AG04450 (cell line): ENCODE measurements at regions of chr7 and their contacts with region 1.

Region 1: GRCh38 chr7:121994625-121995410 is 121.9 kb downstream of the PTPRZ1 start:
- DNase-seq: peak; percentile 55
- H3K4me3 ChIP-seq: no peak overlapping the region
- H3K27ac ChIP-seq: no peak overlapping the region
- H3K27me3 ChIP-seq: no peaks in the 10 kb centered on the region
- CTCF ChIP-seq: peak; percentile 79

Region 2: DNA sequence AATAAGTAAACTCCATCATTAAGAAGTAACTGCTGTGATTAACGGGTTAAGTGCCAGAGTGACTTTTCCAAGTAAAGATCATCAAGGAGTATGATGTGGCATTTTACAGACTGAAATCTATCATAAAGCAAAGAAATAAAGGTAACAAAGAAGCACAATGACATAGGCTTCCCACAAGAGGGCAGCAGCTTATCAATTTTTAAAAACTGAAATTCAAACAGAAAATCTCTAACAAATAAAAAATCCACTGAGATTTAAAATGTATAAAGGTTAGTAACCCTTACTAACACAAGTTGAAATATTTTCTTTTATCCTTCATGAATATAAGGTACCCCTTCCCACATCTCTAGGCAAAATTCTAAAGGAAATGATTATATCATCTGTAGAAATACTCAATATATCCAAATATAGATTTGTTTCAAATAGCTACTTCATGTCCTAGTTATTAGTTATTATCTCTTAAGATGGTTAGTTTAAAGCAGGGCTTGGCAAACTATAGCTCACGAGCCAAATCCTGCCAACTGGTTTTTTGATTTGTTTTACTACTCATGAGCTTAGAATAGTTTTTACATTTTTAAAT is 627.9 kb before region 1 on chr7:
- CTCF ChIA-PET with region 1: interaction called, 30 read pairs
- POLR2A ChIA-PET with region 1: no interaction called
- DNase-seq: peak; percentile 10
- H3K4me3 ChIP-seq: no peak overlapping the region
- H3K27ac ChIP-seq: no peak overlapping the region
- H3K27me3 ChIP-seq: no peaks in the 10 kb centered on the region
- CTCF ChIP-seq: peak; percentile 74

Region 3: GRCh38 chr7:121752706-121753105 is 242.1 kb before region 1 on chr7:
- CTCF ChIA-PET with region 1: interaction called, 118 read pairs
- POLR2A ChIA-PET with region 1: no interaction called
- DNase-seq: no peak
- H3K4me3 ChIP-seq: no peak overlapping the region
- H3K27ac ChIP-seq: no peak overlapping the region
- H3K27me3 ChIP-seq: no peaks in the 10 kb centered on the region
- CTCF ChIP-seq: peak; percentile 43

Region 4: DNA sequence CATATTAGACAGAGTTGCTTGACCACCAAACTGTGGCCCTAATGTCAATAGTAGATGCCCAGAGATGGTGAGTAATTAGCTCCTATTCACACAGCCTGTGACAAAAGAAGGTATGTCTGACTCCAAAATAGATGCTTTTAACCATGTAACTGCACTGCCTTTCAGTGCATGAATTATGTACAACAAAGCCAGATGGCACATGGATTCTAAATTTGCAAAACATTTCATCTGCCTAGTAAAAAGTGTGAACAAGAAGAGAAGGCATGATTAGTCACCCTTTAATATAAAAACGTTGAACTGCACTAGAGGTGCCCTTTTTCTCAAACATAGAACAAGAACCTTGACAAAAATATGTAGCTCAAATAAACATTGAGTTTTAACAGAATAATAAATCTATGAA is 157.4 kb before region 1 on chr7:
- CTCF ChIA-PET with region 1: interaction called, 11 read pairs
- POLR2A ChIA-PET with region 1: no interaction called
- DNase-seq: no peak
- H3K4me3 ChIP-seq: no peak overlapping the region
- H3K27ac ChIP-seq: no peak overlapping the region
- H3K27me3 ChIP-seq: no peaks in the 10 kb centered on the region
- CTCF ChIP-seq: no peak

Region 5: DNA sequence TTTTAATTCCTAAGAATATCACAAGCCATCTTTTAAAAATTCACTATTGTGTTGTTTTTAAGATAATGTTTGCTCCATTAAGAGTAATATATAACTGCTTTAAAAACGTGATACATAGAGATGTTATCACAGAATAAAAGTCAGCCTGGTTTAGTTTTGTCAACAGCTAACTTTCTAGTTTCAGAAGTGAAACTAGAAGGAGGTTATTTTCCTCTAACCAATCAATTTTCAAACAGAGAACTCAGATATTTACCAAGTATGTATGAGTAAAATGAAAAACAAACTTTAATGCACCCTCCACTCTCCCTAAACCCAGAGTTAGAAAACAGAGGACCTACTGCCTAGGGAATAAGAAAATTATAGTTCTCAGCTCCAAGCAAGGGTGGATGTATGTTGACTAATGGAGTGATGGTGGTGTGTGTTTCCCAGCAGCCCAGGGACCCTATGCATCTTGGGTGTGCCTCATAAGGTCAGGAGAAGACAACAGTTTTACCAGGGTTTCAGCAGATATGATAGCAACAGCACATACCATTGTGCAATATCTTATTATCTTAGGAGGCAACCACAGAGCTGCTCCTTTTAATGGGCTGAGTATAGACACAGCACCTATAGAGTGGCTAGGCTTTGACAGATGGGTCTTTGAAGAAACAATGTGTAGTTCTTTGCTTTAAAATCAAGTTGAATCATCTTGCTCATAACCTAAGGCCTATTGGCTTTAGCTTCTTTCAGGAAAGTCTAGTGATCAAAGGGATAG is 63.5 kb before region 1 on chr7:
- CTCF ChIA-PET with region 1: interaction called, 12 read pairs
- POLR2A ChIA-PET with region 1: no interaction called
- DNase-seq: no peak
- H3K4me3 ChIP-seq: no peak overlapping the region
- H3K27ac ChIP-seq: no peak overlapping the region
- H3K27me3 ChIP-seq: no peaks in the 10 kb centered on the region
- CTCF ChIP-seq: no peak

Region 6: DNA sequence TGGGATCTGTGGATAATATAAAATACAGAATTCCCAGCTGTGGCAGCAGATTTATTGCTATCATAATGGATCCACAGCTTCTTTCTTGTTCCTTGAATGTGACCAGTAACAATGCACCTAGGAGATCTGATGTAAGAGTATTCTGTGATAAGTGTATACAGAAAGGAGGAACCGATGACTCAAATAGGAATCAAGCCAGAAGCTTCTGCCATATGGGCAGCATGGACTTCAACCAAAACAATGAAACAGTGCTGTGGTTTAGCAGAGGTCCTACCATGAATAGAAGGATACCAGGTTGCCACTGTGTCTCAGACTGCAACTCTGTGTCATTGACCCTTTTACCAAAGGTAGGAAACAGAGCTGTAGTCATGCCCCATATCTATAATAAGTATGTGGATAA is 40.0 kb before region 1 on chr7:
- CTCF ChIA-PET with region 1: interaction called, 34 read pairs
- POLR2A ChIA-PET with region 1: no interaction called
- DNase-seq: peak; percentile 41
- H3K4me3 ChIP-seq: no peak overlapping the region
- H3K27ac ChIP-seq: no peak overlapping the region
- H3K27me3 ChIP-seq: no peaks in the 10 kb centered on the region
- CTCF ChIP-seq: no peak

Region 7: GRCh38 chr7:122006687-122007086 is 11.9 kb after region 1 on chr7:
- CTCF ChIA-PET with region 1: interaction called, 45 read pairs
- POLR2A ChIA-PET with region 1: no interaction called
- DNase-seq: no peak
- H3K4me3 ChIP-seq: no peak overlapping the region
- H3K27ac ChIP-seq: no peak overlapping the region
- H3K27me3 ChIP-seq: no peaks in the 10 kb centered on the region
- CTCF ChIP-seq: no peak